ENCODE measurements at regions of chr17 and their contacts with region 1.

Region 1: GRCh38 chr17:51056813-51057510 is 63.7 kb downstream of the SPAG9 start:
- DNase-seq: peak in 1 of 2 experiments; percentile 52
- H3K4me3 ChIP-seq: no peak overlapping the region
- H3K27ac ChIP-seq: no peak overlapping the region
- H3K4me1 ChIP-seq: peaks cover 2 to 4% (median 3%) of the 10 kb centered on the region in 4 experiments; a peak in 4 of 7 replicates
- H3K27me3 ChIP-seq: no peaks in the 10 kb centered on the region
- CTCF ChIP-seq: peak in 2 of 3 experiments; percentile 49 to 51; a peak in 2 of 4 replicates
- EP300 ChIP-seq: no peak
- POLR2A ChIP-seq: no peak
- RAD21 ChIP-seq: peak; percentile 55 to 72

Region 2: DNA sequence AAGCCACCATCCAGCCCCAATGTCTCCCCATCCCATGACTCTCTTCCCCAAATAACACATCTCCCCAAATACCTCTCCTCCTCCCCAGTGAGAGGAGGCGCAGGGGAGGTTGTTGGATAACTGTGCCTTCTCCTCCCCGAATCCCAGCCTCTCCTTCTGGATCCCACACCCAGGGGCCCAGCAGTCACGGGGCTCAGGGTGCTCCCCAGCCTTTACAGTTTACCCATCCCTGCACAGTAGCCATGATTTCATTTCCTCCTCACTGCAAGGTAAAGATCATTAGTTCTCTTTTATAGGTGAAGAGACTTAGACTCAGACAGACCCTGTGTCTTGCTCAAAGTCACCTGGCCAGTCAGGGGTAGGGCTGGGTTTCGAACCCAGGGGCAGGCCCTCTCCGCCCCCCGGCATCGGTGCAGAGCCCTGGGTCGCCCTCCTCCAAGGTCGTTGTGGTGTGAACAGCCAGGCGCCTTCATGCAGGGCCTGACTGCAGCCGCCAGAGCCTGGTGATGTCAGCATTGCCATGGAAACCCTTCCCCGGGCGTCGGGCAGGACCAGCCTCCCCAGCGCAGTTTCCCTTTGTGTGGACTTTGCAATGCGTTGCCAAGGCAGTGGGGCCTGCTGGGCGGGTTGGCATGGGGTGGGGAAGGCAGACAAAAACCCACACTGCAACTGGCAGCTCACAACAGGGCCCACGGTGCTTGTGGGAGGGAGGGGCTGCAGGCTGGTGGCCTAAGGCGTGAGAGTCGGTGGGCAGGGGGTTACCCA is 137.5 kb before region 1 on chr17:
- CTCF ChIA-PET with region 1: no interaction called
- POLR2A ChIA-PET with region 1: no interaction called
- DNase-seq: peak in 1 of 2 experiments; percentile 82
- H3K4me3 ChIP-seq: no peak overlapping the region
- H3K27ac ChIP-seq: no peak overlapping the region; the same call in 1 of the 2 replicates
- H3K4me1 ChIP-seq: peaks cover 2 to 48% (median 34%) of the 10 kb centered on the region in 4 experiments
- H3K27me3 ChIP-seq: peaks cover 0 to 2% (median 0%) of the 10 kb centered on the region in 4 experiments; a peak in 2 of 7 replicates
- CTCF ChIP-seq: no peak
- EP300 ChIP-seq: no peak
- POLR2A ChIP-seq: no peak
- RAD21 ChIP-seq: no peak

Region 3: DNA sequence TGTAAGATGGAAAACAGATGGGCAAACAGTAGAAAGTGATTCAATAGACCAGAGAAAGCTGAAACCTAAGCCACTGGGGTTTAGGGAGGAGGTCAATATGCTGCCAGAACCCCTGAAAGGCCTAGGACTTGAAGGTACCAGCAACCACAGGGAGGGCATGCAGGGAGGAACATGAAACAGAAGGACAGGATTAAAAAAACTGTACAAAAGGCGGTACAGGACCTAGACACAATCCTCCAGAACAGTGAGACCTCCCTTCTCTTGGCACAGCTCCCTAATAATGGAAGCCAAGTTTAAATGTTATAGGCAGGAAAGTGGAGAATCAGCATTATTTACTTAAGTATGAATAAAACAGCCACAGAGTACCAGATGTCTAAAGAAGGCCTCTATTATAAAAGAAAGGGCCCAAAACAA is 41.8 kb before region 1 on chr17:
- CTCF ChIA-PET with region 1: interaction called, 14 read pairs
- POLR2A ChIA-PET with region 1: no interaction called
- DNase-seq: no peak
- H3K4me3 ChIP-seq: no peak overlapping the region
- H3K27ac ChIP-seq: no peak overlapping the region
- H3K4me1 ChIP-seq: no peaks in the 10 kb centered on the region
- H3K27me3 ChIP-seq: no peaks in the 10 kb centered on the region
- CTCF ChIP-seq: no peak
- EP300 ChIP-seq: no peak
- POLR2A ChIP-seq: no peak
- RAD21 ChIP-seq: no peak

Region 4: GRCh38 chr17:51029568-51030463 is 27.1 kb before region 1 on chr17:
- CTCF ChIA-PET with region 1: interaction called, 13 read pairs
- POLR2A ChIA-PET with region 1: no interaction called
- DNase-seq: no peak
- H3K4me3 ChIP-seq: no peak overlapping the region
- H3K27ac ChIP-seq: no peak overlapping the region
- H3K4me1 ChIP-seq: no peaks in the 10 kb centered on the region
- H3K27me3 ChIP-seq: no peaks in the 10 kb centered on the region
- CTCF ChIP-seq: no peak
- EP300 ChIP-seq: no peak
- POLR2A ChIP-seq: no peak
- RAD21 ChIP-seq: no peak

Region 5: DNA sequence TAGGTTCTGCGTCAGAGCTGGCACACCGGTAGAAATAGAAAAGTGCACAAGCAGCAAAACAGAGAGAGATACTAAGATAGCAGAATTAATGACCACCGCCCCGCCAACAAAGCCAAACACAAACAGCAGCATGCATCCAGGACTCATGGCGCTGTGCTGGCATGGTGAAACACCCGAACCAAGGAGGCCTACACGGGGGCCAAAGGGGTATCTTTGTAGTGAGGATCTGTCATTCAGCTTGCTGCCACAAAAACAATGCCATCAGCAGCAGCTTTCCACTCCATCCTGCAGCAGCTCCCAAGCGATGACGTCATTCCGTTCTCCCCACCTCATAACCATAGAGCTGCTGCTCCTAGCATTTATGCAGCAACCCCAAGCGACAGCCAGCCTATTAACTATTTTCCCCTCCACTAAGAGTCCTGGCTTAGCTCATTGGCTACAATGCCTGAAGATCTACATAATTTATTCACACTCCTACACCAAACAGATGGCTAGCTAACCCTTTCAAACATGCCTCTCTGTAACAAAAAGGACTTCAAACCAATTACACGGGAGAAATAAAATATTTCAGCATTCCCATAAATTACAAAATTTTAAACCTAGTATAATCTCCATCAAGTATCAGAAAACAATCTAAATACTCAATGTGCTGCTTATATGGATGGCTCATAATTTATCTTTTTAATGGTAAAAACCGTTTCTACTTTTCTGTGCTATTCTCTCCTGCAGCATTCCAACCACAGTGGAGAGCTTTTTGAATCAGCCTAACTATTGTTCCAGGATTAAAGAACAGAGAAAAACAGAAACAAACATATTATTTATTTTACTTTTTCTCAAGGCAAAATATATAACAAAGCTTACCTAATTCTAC is 10.2 kb before region 1 on chr17:
- CTCF ChIA-PET with region 1: interaction called, 79 read pairs
- POLR2A ChIA-PET with region 1: interaction called, 8 read pairs
- DNase-seq: peak; percentile 53 to 75
- H3K4me3 ChIP-seq: peak overlapping the region; percentile 32 to 61 (median 38); a peak in 7 of 8 replicates
- H3K27ac ChIP-seq: peak overlapping the region; percentile 84
- H3K4me1 ChIP-seq: peaks cover 1 to 14% (median 5%) of the 10 kb centered on the region in 4 experiments; a peak in 5 of 7 replicates
- H3K27me3 ChIP-seq: no peaks in the 10 kb centered on the region
- CTCF ChIP-seq: no peak
- EP300 ChIP-seq: no peak
- POLR2A ChIP-seq: peak; percentile 80 to 82
- RAD21 ChIP-seq: no peak

Measured in H1 (cell line).